ENCODE measurements at regions of chr5 and their contacts with region 1.

Region 1: GRCh38 chr5:1105350-1106265 is 6.3 kb downstream of the SLC12A7 start:
- H3K4me3 ChIP-seq: no peak overlapping the region
- H3K27ac ChIP-seq: no peak overlapping the region
- H3K4me1 ChIP-seq: no peaks in the 10 kb centered on the region; the same call in 1 of the 2 replicates
- CTCF ChIP-seq: no peak

Region 2: GRCh38 chr5:1118231-1118698 is 12.7 kb after region 1 on chr5:
- CTCF ChIA-PET with region 1: interaction called, 7 read pairs
- POLR2A ChIA-PET with region 1: interaction called, 10 read pairs
- H3K4me3 ChIP-seq: no peak overlapping the region
- H3K27ac ChIP-seq: peak overlapping the region; percentile 76
- H3K4me1 ChIP-seq: peaks cover 16% of the 10 kb centered on the region
- CTCF ChIP-seq: no peak

Measured in HEK293 (cell line).